Panc1 (cell line): ENCODE measurements at regions of chr5 and their contacts with region 1.

Region 1: GRCh38 chr5:73673161-73673591 is 47.2 kb downstream of the ARHGEF28 start:
- DNase-seq: peak; percentile 43
- ATAC-seq: peak; percentile 53; the same call in 1 of the 2 replicates
- H3K4me3 ChIP-seq: no peak overlapping the region
- H3K27ac ChIP-seq: peak overlapping the region; percentile 77
- H3K4me1 ChIP-seq: peaks cover 49% of the 10 kb centered on the region
- H3K27me3 ChIP-seq: no peaks in the 10 kb centered on the region
- CTCF ChIP-seq: no peak

Region 2: GRCh38 chr5:73591102-73591695 is 82.0 kb before region 1 on chr5:
- CTCF ChIA-PET with region 1: interaction called, 10 read pairs
- POLR2A ChIA-PET with region 1: no interaction called
- in situ Hi-C with region 1: no loop called
- intact Hi-C with region 1: no loop called
- DNase-seq: peak; percentile 83
- ATAC-seq: peak; percentile 85
- H3K4me3 ChIP-seq: no peak overlapping the region
- H3K27ac ChIP-seq: no peak overlapping the region
- H3K4me1 ChIP-seq: no peaks in the 10 kb centered on the region
- H3K27me3 ChIP-seq: no peaks in the 10 kb centered on the region
- CTCF ChIP-seq: peak; percentile 76; the same call in 1 of the 2 replicates

Region 3: DNA sequence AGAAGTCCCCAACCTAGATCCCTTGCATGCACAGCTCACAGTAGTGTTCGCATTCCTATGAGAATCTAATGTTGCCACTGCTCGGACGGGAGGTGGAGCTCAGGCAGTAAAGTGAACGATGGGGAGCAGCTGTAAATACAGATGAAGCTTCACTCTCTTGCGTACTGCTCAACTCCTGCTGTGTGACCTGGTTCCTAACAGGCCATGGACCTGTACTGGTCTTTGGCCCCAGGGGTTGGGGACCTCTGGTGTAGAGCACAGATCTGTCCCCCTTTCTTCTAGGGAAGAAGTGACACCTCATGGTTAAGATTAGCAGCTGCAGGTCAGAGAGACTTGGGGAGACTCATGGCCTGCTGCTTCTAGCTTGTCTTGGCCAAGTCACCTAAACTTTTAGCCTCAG is 40.1 kb before region 1 on chr5:
- CTCF ChIA-PET with region 1: interaction called, 10 read pairs
- POLR2A ChIA-PET with region 1: no interaction called
- in situ Hi-C with region 1: no loop called
- intact Hi-C with region 1: no loop called
- DNase-seq: no peak
- ATAC-seq: peak; percentile 66
- H3K4me3 ChIP-seq: no peak overlapping the region
- H3K27ac ChIP-seq: peak overlapping the region; percentile 55
- H3K4me1 ChIP-seq: peaks cover 85% of the 10 kb centered on the region
- H3K27me3 ChIP-seq: no peaks in the 10 kb centered on the region
- CTCF ChIP-seq: peak; percentile 66

Region 4: DNA sequence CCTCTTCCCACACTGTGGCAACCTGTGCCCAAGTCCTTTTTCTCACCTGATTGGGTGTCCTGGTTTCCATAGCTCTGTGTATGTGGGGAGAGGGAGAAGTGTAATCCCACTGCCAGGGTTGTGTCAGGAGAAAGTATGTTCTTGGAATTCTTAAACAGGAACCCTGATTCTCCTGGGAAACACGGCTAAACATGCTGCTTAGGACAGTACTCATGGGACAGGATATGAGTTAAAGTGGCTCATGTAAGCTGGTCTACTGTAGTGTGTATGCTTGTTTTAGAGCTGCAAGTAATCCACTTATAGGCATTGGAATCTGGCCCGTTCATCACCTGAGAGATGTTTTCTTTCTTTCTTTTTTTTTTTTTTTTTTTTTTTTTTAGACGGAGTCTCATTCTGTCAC is 23.2 kb before region 1 on chr5:
- CTCF ChIA-PET with region 1: no interaction called
- POLR2A ChIA-PET with region 1: interaction called, 13 read pairs
- in situ Hi-C with region 1: no loop called
- intact Hi-C with region 1: no loop called
- DNase-seq: no peak
- ATAC-seq: no peak
- H3K4me3 ChIP-seq: no peak overlapping the region
- H3K27ac ChIP-seq: no peak overlapping the region
- H3K4me1 ChIP-seq: peaks cover 13% of the 10 kb centered on the region; the same call in 1 of the 2 replicates
- H3K27me3 ChIP-seq: no peaks in the 10 kb centered on the region
- CTCF ChIP-seq: no peak

Region 5: DNA sequence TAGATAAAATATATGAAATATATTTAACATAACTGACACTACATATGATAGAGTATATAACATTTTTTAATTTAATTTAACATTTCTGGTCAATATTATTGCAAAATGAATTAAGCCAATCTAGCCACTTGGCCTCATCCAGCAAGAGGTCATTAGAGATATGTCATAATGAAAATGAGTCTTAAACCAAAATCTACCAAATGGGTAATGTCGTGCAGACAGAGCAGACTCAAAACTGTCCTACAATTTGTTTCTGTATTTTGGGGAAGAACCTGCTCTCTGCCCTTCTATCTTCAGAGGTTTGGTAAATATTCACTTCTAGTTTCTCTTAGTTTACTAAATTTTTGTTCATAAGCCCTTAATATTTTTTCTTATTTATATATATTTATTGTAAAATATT is 14.2 kb after region 1 on chr5:
- CTCF ChIA-PET with region 1: interaction called, 10 read pairs
- POLR2A ChIA-PET with region 1: interaction called, 3 read pairs
- in situ Hi-C with region 1: no loop called
- intact Hi-C with region 1: no loop called
- DNase-seq: no peak
- ATAC-seq: no peak
- H3K4me3 ChIP-seq: no peak overlapping the region
- H3K27ac ChIP-seq: no peak overlapping the region
- H3K4me1 ChIP-seq: no peaks in the 10 kb centered on the region; the same call in 1 of the 2 replicates
- H3K27me3 ChIP-seq: no peaks in the 10 kb centered on the region
- CTCF ChIP-seq: no peak